Activated CD4-positive, alpha-beta T cell treated with anti-CD3 and anti-CD28 coated beads for 36 hours (primary cell): ENCODE measurements at regions of chr1 and their contacts with region 1.

Region 1: GRCh38 chr1:41662061-41662764 is 177.7 kb upstream of the EDN2 start:
- DNase-seq: peak; percentile 87
- ATAC-seq: peak; percentile 68
- H3K4me3 Mint-ChIP-seq: peak overlapping the region; percentile 97
- H3K27ac Mint-ChIP-seq: no peak overlapping the region
- H3K4me1 Mint-ChIP-seq: peaks cover 79% of the 10 kb centered on the region
- H3K27me3 Mint-ChIP-seq: no peaks in the 10 kb centered on the region

Region 2: GRCh38 chr1:41537788-41538351 is 124.3 kb before region 1 on chr1:
- CTCF ChIA-PET with region 1: no interaction called
- POLR2A ChIA-PET with region 1: no interaction called
- intact Hi-C with region 1: no loop called
- DNase-seq: no peak
- ATAC-seq: no peak
- H3K4me3 Mint-ChIP-seq: no peak overlapping the region
- H3K27ac Mint-ChIP-seq: no peak overlapping the region
- H3K4me1 Mint-ChIP-seq: peaks cover 4% of the 10 kb centered on the region
- H3K27me3 Mint-ChIP-seq: no peaks in the 10 kb centered on the region

Region 3: DNA sequence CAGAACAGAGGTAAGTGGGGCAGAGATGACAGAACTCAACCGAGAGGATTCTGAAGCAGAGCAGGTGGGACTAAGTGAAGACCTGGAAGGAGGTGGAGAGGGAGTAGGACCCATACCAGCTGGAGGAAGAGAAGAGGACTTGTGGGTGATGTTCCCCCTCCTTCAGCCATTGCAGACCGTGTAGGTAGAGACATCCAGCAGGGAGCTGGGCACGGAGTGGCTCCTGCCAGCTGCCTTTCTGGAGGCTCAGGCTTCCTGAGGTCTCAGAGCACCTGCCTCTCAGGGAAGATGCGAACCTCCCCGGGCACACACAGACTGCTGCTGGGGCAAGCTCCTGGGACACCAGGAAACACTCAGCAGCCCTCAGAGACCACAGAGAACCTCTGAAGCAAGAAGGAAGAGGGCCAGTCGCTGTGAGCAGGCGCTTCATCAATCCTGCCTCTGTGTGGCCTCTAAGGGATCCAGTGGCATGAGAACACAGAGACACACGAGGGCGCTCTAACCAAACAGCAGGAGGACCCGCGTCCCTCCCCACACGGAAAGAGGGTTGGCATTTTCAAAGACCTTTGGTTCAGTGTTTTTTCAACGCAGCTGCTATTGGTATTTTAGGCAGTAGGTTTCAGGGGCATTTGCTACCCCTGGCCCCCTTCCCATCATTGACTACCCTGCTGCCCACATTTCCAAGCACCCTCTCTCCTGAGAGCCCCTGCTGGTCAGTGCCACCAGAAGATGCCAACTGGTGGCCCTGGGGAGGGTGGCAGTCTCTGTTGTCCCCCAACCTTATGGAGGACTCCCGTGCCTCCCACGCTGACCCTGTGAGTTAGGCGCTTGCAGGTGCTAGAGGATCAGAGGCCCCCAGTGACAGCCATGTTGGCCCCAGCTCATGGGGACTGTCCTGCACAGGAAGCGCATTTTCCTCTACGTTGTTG is 88.2 kb before region 1 on chr1:
- CTCF ChIA-PET with region 1: interaction called, 3 read pairs
- POLR2A ChIA-PET with region 1: no interaction called
- intact Hi-C with region 1: loop called (anchors 1 to 10 kb)
- DNase-seq: peak; percentile 90
- ATAC-seq: peak; percentile 93
- H3K4me3 Mint-ChIP-seq: no peak overlapping the region
- H3K27ac Mint-ChIP-seq: peak overlapping the region; percentile 17
- H3K4me1 Mint-ChIP-seq: peaks cover 41% of the 10 kb centered on the region
- H3K27me3 Mint-ChIP-seq: no peaks in the 10 kb centered on the region

Region 4: GRCh38 chr1:41639332-41639936 is 22.8 kb before region 1 on chr1:
- CTCF ChIA-PET with region 1: interaction called, 3 read pairs
- POLR2A ChIA-PET with region 1: interaction called, 6 read pairs
- intact Hi-C with region 1: loop called (anchors 1 to 2 kb)
- DNase-seq: peak; percentile 84
- ATAC-seq: peak; percentile 83
- H3K4me3 Mint-ChIP-seq: peak overlapping the region; percentile 62
- H3K27ac Mint-ChIP-seq: no peak overlapping the region
- H3K4me1 Mint-ChIP-seq: peaks cover 13% of the 10 kb centered on the region
- H3K27me3 Mint-ChIP-seq: no peaks in the 10 kb centered on the region

Region 5: DNA sequence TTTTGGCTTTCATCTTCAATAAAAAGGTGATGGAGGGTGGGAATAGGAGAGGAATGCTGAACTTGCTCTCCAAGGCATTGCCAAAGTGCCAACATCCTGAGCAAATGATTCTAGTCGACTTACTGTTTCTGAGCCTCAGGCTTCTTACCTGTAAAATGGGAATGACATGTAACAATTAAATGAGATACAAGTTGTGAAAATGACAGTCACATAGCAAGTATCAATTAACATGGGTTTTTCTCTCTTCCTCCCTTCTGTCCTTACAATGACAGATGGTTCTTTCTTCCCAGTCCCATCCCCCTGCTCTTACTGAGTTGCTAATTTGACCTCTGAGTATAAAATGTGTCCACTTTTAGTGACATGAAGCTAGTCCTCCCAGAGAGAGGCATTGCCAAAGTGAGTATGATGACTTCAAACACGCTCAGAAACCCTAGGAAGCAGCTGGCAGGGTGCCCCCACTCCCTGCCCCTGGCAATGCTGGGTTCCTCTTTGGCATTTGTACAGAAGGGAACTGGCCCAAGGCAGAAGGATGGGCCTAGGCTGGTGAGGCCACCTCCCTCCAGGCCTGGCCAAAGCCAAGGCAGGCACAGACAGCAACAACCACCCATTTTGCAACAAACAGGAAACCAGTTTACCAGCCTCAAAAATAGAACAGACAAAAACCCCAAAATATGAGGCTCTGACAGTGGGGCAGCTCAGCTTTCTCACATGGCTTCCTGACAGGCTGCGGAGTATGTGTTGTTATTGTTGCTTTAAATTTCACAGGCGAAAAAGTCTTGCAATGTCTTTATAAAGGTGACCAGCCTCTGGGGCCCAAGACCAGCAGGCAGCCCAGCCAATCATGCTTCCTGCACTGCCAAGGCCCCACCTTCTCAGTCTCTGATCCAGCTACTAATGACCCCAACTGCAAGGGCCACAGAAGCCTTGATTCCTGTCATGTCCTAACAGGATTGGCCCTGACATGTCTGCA is 140.6 kb after region 1 on chr1:
- CTCF ChIA-PET with region 1: no interaction called
- POLR2A ChIA-PET with region 1: no interaction called
- intact Hi-C with region 1: loop called (anchors 1 to 5 kb)
- DNase-seq: no peak
- ATAC-seq: no peak
- H3K4me3 Mint-ChIP-seq: no peak overlapping the region
- H3K27ac Mint-ChIP-seq: peak overlapping the region; percentile 47
- H3K4me1 Mint-ChIP-seq: peaks cover 81% of the 10 kb centered on the region
- H3K27me3 Mint-ChIP-seq: no peaks in the 10 kb centered on the region

Region 6: DNA sequence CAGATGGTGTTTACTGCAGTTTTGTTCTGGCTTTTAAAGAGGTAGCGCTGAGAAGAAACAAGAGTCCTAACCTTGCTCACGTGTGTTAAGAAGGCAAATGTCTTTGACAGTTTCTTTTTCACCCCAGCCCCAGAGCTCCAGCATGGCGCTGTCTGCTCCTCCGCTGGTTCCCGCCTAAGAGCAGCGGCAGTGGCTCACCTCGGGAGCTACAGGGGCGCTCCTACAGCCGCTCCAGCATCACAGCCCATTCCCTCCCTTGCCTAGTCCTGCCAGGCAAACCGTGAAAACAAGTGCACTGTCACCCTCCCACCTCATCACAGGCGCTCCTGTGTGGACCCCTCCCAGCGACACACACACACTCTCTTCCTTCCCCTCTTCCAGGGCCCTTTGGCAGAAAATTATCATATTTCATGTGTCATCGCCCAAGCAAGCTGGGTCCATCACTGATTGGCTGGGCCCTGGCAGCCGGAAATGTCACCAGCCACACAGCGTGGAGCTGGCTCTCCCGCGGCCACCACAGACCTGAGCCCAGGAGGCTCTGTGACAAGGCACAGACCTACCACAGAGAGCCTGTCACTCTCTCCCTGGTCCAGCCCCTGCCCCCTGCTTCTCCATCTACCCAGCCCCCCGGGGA is 257.7 kb after region 1 on chr1:
- CTCF ChIA-PET with region 1: no interaction called
- POLR2A ChIA-PET with region 1: no interaction called
- intact Hi-C with region 1: loop called in 1 of 2 experiments (anchors 5 kb)
- DNase-seq: peak; percentile 92
- ATAC-seq: peak; percentile 92
- H3K4me3 Mint-ChIP-seq: peak overlapping the region; percentile 72
- H3K27ac Mint-ChIP-seq: peak overlapping the region; percentile 88
- H3K4me1 Mint-ChIP-seq: peaks cover 57% of the 10 kb centered on the region
- H3K27me3 Mint-ChIP-seq: no peaks in the 10 kb centered on the region